Activated CD4-positive, alpha-beta memory T cell treated with anti-CD3 and anti-CD28 coated beads for 36 hours (primary cell): ENCODE measurements at regions of chr1 and their contacts with region 1.

Region 1: DNA sequence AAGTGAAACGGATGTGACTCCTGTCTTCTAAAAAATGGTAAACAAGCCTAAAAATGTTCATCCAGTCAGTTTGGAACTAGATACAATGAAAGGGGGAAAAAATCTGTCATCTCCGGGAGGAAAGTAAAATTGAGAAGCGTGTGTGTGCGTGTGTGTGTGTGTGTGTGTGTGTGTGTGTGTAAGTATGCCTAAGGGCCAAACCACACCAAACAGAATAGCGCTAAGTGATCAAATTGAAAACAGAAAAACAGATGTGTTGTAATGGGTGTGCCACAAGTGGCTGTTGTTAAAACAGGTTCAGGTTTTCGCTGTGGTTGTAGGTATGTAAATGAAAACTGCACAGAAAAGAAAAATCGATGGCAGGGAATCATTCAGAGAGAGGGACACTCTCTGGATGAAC is 106.7 kb downstream of the RNF220 start:
- DNase-seq: peak; percentile 64
- H3K4me3 Mint-ChIP-seq: no peak overlapping the region
- H3K27ac Mint-ChIP-seq: peak overlapping the region; percentile 84
- H3K4me1 Mint-ChIP-seq: peaks cover 23% of the 10 kb centered on the region
- H3K27me3 Mint-ChIP-seq: peaks cover 29% of the 10 kb centered on the region

Region 2: GRCh38 chr1:44275991-44276405 is 235.8 kb before region 1 on chr1:
- CTCF ChIA-PET with region 1: no interaction called
- POLR2A ChIA-PET with region 1: no interaction called
- intact Hi-C with region 1: no loop called
- DNase-seq: no peak
- H3K4me3 Mint-ChIP-seq: no peak overlapping the region
- H3K27ac Mint-ChIP-seq: no peak overlapping the region
- H3K4me1 Mint-ChIP-seq: peaks cover 16% of the 10 kb centered on the region
- H3K27me3 Mint-ChIP-seq: no peaks in the 10 kb centered on the region

Region 3: DNA sequence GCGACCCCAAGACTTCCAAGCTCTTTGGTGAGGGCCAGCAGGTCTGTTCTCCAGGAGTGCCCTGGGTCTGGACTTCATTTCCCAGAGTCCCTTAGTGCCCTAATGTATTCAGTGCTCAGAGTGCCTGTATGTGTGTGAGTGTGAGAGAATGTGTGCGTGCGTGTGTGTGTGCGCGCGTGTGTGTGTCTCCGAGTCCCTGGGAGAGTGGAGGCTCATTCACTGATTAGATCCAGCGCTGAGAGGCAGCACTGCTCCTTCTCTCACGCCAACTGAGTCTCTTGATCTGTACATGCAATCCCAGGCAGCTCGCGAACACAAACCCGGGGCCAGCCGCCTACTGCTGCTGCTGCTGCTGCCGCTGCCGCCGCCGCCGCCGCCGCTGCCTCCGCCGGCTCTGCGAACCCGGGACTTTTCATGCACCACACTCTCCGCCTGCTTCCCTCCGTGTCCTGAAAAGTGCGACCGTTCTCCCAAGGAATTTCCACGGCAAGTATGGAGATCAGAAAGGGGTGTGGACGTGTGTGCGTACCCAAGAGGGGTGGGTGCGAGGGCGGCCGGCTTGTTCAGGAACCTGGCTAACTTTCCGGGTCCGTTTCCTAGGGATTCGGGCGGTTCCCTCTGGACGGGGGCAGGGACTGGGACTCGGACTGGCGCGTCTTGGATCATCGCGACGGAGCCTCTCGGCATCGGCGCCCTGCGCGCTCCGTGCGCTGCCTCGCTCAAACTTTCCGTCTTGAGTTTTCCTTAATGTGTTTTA is 106.5 kb before region 1 on chr1 and contains the start of gene RNF220:
- CTCF ChIA-PET with region 1: no interaction called
- POLR2A ChIA-PET with region 1: no interaction called
- intact Hi-C with region 1: loop called (anchors 5 kb)
- DNase-seq: peak; percentile 58
- H3K4me3 Mint-ChIP-seq: peak within 1 kb of the TSS; percentile 74
- H3K27ac Mint-ChIP-seq: no peak within 1 kb of the TSS
- H3K4me1 Mint-ChIP-seq: peaks cover 36% of the 10 kb centered on the region
- H3K27me3 Mint-ChIP-seq: peaks cover 62% of the 10 kb centered on the region
- total RNA-seq, gene RNF220: 73.7 to 74.3 TPM

Region 4: GRCh38 chr1:44531785-44532566 is 20.2 kb after region 1 on chr1:
- CTCF ChIA-PET with region 1: no interaction called
- POLR2A ChIA-PET with region 1: interaction called, 6 read pairs
- intact Hi-C with region 1: loop called (anchors 1 kb)
- DNase-seq: peak; percentile 28
- H3K4me3 Mint-ChIP-seq: no peak overlapping the region
- H3K27ac Mint-ChIP-seq: no peak overlapping the region
- H3K4me1 Mint-ChIP-seq: peaks cover 8% of the 10 kb centered on the region
- H3K27me3 Mint-ChIP-seq: peaks cover 10% of the 10 kb centered on the region